Caco-2 (cell line): ENCODE measurements at regions of chr11 and their contacts with region 1.

Region 1: GRCh38 chr11:103108933-103109817 is at the start of gene DYNC2H1:
- DNase-seq: peak; percentile 91 to 96
- H3K4me3 ChIP-seq: peak within 1 kb of the TSS; percentile 66
- H3K4me3 Mint-ChIP-seq: peak within 1 kb of the TSS; percentile 81
- H3K27ac Mint-ChIP-seq: peak within 1 kb of the TSS; percentile 88
- H3K4me1 ChIP-seq: peaks cover 4% of the 10 kb centered on the region; the same call in 1 of the 2 replicates
- H3K4me1 Mint-ChIP-seq: no peaks in the 10 kb centered on the region
- H3K27me3 ChIP-seq: no peaks in the 10 kb centered on the region
- H3K27me3 Mint-ChIP-seq: no peaks in the 10 kb centered on the region
- CTCF ChIP-seq: peak; percentile 67 to 84
- total RNA-seq, gene DYNC2H1: 5.9 and 6.5 TPM in 2 replicates

Region 2: GRCh38 chr11:103091801-103092524 is 17.2 kb before region 1 on chr11 and contains the start of gene DCUN1D5:
- CTCF ChIA-PET with region 1: interaction called, 25 read pairs
- POLR2A ChIA-PET with region 1: interaction called, 41 read pairs
- intact Hi-C with region 1: loop called (anchors 1 kb)
- DNase-seq: peak; percentile 99 to 100
- H3K4me3 ChIP-seq: peak within 1 kb of the TSS; percentile 74
- H3K4me3 Mint-ChIP-seq: peak within 1 kb of the TSS; percentile 85
- H3K27ac Mint-ChIP-seq: peak within 1 kb of the TSS; percentile 97
- H3K4me1 ChIP-seq: peaks cover 17% of the 10 kb centered on the region
- H3K4me1 Mint-ChIP-seq: peaks cover 8% of the 10 kb centered on the region
- H3K27me3 ChIP-seq: no peaks in the 10 kb centered on the region
- H3K27me3 Mint-ChIP-seq: peaks cover 3% of the 10 kb centered on the region
- CTCF ChIP-seq: no peak
- total RNA-seq, gene DCUN1D5: 95.1 and 105 TPM in 2 replicates

Region 3: DNA sequence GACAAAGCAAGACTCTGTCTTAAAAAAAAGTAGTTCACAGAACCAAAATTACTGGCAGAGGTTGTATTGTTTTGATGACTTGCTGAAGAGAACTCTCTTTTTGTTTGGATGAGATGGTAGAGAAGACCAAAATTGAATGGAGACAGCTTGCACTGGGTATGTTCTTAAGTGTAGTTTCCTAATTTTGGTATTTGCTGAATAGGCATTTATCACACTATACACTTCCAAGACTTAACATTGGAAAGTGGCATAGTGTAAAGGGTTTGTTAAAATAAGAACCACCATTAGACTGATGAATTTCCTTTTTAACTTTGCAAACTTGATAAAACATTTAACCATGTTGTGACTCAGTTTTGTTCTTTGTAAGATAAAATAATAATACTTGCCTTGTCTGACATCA is 11.9 kb before region 1 on chr11:
- CTCF ChIA-PET with region 1: interaction called, 25 read pairs
- POLR2A ChIA-PET with region 1: interaction called, 41 read pairs
- intact Hi-C with region 1: loop called (anchors 1 kb)
- DNase-seq: no peak
- H3K4me3 ChIP-seq: no peak overlapping the region
- H3K4me3 Mint-ChIP-seq: no peak overlapping the region
- H3K27ac Mint-ChIP-seq: no peak overlapping the region
- H3K4me1 ChIP-seq: peaks cover 3% of the 10 kb centered on the region
- H3K4me1 Mint-ChIP-seq: peaks cover 8% of the 10 kb centered on the region
- H3K27me3 ChIP-seq: peaks cover 3% of the 10 kb centered on the region; the same call in 1 of the 2 replicates
- H3K27me3 Mint-ChIP-seq: peaks cover 6% of the 10 kb centered on the region
- CTCF ChIP-seq: no peak